Natural killer cell (primary cell): ENCODE measurements at regions of chr6 and their contacts with region 1.

Region 1: GRCh38 chr6:132530293-132530974 is 7.6 kb upstream of the TAAR9 start:
- DNase-seq: peak; percentile 40 to 85
- ATAC-seq: peak; percentile 76 to 89 (median 84)
- H3K4me3 ChIP-seq: no peak overlapping the region
- H3K4me3 Mint-ChIP-seq: no peak overlapping the region
- H3K27ac ChIP-seq: no peak overlapping the region
- H3K27ac Mint-ChIP-seq: no peak overlapping the region
- H3K4me1 ChIP-seq: peaks cover 2% of the 10 kb centered on the region
- H3K4me1 Mint-ChIP-seq: no peaks in the 10 kb centered on the region
- H3K27me3 ChIP-seq: peaks cover 2% of the 10 kb centered on the region
- H3K27me3 Mint-ChIP-seq: peaks cover 14 to 18% of the 10 kb centered on the region in 2 donors
- CTCF ChIP-seq: peak; percentile 93

Region 2: GRCh38 chr6:132584698-132585097 is 54.3 kb after region 1 on chr6:
- intact Hi-C with region 1: no loop called
- DNase-seq: no peak
- ATAC-seq: no peak
- H3K4me3 ChIP-seq: no peak overlapping the region
- H3K4me3 Mint-ChIP-seq: no peak overlapping the region
- H3K27ac ChIP-seq: no peak overlapping the region
- H3K27ac Mint-ChIP-seq: no peak overlapping the region
- H3K4me1 ChIP-seq: no peaks in the 10 kb centered on the region
- H3K4me1 Mint-ChIP-seq: no peaks in the 10 kb centered on the region
- H3K27me3 ChIP-seq: no peaks in the 10 kb centered on the region
- H3K27me3 Mint-ChIP-seq: peaks cover 11 to 30% of the 10 kb centered on the region in 2 donors
- CTCF ChIP-seq: no peak

Region 3: GRCh38 chr6:132768051-132768517 is 237.7 kb after region 1 on chr6:
- intact Hi-C with region 1: loop called (anchors 1 kb)
- DNase-seq: peak; percentile 21 to 38
- ATAC-seq: peak; percentile 70 to 84 (median 84)
- H3K4me3 ChIP-seq: no peak overlapping the region
- H3K4me3 Mint-ChIP-seq: no peak overlapping the region
- H3K27ac ChIP-seq: no peak overlapping the region
- H3K27ac Mint-ChIP-seq: no peak overlapping the region
- H3K4me1 ChIP-seq: peaks cover 16% of the 10 kb centered on the region
- H3K4me1 Mint-ChIP-seq: peaks cover 14 to 17% of the 10 kb centered on the region in 2 donors
- H3K27me3 ChIP-seq: no peaks in the 10 kb centered on the region
- H3K27me3 Mint-ChIP-seq: peaks cover 0 to 2% of the 10 kb centered on the region in 2 donors
- CTCF ChIP-seq: peak; percentile 48

Region 4: GRCh38 chr6:132798869-132799538 is 268.6 kb after region 1 on chr6:
- intact Hi-C with region 1: loop called (anchors 1 kb)
- DNase-seq: peak; percentile 36 to 86
- ATAC-seq: peak; percentile 86
- H3K4me3 ChIP-seq: peak overlapping the region; percentile 82
- H3K4me3 Mint-ChIP-seq: no peak overlapping the region
- H3K27ac ChIP-seq: peak overlapping the region; percentile 70
- H3K27ac Mint-ChIP-seq: no peak overlapping the region
- H3K4me1 ChIP-seq: no peaks in the 10 kb centered on the region
- H3K4me1 Mint-ChIP-seq: peaks cover 10 to 16% of the 10 kb centered on the region in 2 donors
- H3K27me3 ChIP-seq: peaks cover 2% of the 10 kb centered on the region
- H3K27me3 Mint-ChIP-seq: peaks cover 0 to 2% of the 10 kb centered on the region in 2 donors
- CTCF ChIP-seq: peak; percentile 72

Region 5: GRCh38 chr6:132962936-132963868 is 432.8 kb after region 1 on chr6:
- intact Hi-C with region 1: loop called (anchors 2 kb)
- DNase-seq: peak; percentile 24 to 62
- ATAC-seq: peak; percentile 58 to 78 (median 78)
- H3K4me3 ChIP-seq: no peak overlapping the region
- H3K4me3 Mint-ChIP-seq: no peak overlapping the region
- H3K27ac ChIP-seq: no peak overlapping the region
- H3K27ac Mint-ChIP-seq: no peak overlapping the region
- H3K4me1 ChIP-seq: no peaks in the 10 kb centered on the region
- H3K4me1 Mint-ChIP-seq: no peaks in the 10 kb centered on the region
- H3K27me3 ChIP-seq: peaks cover 3% of the 10 kb centered on the region
- H3K27me3 Mint-ChIP-seq: peaks cover 9 to 27% of the 10 kb centered on the region in 2 donors
- CTCF ChIP-seq: peak; percentile 78

Region 6: DNA sequence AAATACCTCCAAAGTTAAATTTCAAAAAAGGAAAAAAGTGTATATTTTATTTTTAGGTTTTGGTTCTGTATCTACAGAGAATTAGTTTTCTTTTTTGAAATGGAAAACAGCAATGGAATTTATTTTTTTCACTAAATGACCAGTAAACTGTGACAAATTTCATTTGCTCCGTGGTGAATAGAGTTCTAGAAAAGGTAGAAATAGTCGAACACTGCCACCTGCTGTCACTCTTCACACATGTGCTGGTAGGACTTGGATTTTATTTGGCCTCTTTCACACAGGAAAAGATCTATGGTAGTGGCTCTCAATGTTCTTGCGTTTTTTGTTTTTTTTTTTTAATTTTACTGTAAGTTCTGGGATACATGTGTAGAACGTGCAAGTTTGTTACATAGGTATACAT is 1023.2 kb after region 1 on chr6:
- intact Hi-C with region 1: loop called (anchors 5 kb)
- DNase-seq: peak in 1 of 2 donors; percentile 56
- ATAC-seq: no peak
- H3K4me3 ChIP-seq: no peak overlapping the region
- H3K4me3 Mint-ChIP-seq: no peak overlapping the region
- H3K27ac ChIP-seq: no peak overlapping the region
- H3K27ac Mint-ChIP-seq: no peak overlapping the region
- H3K4me1 ChIP-seq: no peaks in the 10 kb centered on the region
- H3K4me1 Mint-ChIP-seq: no peaks in the 10 kb centered on the region
- H3K27me3 ChIP-seq: no peaks in the 10 kb centered on the region
- H3K27me3 Mint-ChIP-seq: peaks cover 0 to 4% of the 10 kb centered on the region in 2 donors
- CTCF ChIP-seq: peak; percentile 20

Region 7: GRCh38 chr6:133916650-133917151 is 1386.3 kb after region 1 on chr6:
- intact Hi-C with region 1: loop called (anchors 2 kb)
- DNase-seq: peak; percentile 56 to 79
- ATAC-seq: peak; percentile 71 to 83 (median 76)
- H3K4me3 ChIP-seq: no peak overlapping the region
- H3K4me3 Mint-ChIP-seq: no peak overlapping the region
- H3K27ac ChIP-seq: no peak overlapping the region
- H3K27ac Mint-ChIP-seq: no peak overlapping the region
- H3K4me1 ChIP-seq: no peaks in the 10 kb centered on the region
- H3K4me1 Mint-ChIP-seq: no peaks in the 10 kb centered on the region
- H3K27me3 ChIP-seq: peaks cover 4% of the 10 kb centered on the region
- H3K27me3 Mint-ChIP-seq: peaks cover 24 to 50% of the 10 kb centered on the region in 2 donors
- CTCF ChIP-seq: peak; percentile 85